Activated CD8-positive, alpha-beta T cell treated with anti-CD3 and anti-CD28 coated beads, Interleukin-2, amount 10 ng/mL, durations not matched to agents 7 days and 5 days (primary cell): ENCODE measurements at regions of chr1 and their contacts with region 1.

Region 1: GRCh38 chr1:206479183-206480125 is 9.2 kb downstream of the IKBKE start:
- DNase-seq: peak; percentile 80
- ATAC-seq: peak; percentile 73
- H3K4me3 Mint-ChIP-seq: no peak overlapping the region
- H3K27ac Mint-ChIP-seq: peak overlapping the region; percentile 55
- H3K4me1 Mint-ChIP-seq: peaks cover 18% of the 10 kb centered on the region
- H3K27me3 Mint-ChIP-seq: no peaks in the 10 kb centered on the region

Region 2: DNA sequence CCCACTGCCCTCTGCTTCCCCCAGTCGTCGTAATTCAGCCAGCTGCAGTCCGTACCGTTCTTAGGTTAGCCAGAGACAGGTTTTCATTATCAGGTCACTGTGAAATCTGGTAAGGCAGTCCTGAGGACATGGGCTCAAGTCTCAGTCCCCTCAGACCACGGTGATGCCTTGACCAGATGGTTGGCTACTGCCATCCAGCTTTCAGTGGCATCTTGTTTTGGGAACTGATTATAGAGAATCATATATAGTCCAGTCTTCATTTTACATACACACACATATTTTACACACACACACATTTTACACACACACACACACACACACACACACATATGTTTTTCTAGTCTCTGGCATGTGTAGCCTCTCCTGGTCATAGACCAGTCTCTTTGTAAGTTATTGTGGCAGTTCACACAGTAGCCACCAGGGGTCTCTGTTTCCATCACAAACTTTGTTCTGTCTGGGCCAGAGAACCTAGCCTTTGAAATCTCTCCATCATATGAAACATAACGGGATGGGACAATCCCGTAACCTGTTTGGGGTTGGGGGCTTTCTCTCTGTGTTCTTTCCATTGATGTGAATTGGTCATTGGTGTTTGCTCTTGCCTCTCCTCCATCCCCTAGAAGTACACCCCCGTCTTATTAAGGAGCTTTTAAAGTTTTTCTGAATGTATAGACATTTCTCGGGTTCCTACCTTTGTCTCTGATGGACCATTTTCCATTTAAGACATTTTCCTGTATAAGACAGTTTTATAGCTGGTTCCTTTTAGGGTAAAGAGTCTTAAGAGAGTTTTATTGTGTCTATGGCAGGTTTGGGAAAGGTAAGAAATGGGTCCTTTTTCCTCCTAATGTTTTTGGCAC is 17.6 kb before region 1 on chr1:
- CTCF ChIA-PET with region 1: interaction called, 94 read pairs
- POLR2A ChIA-PET with region 1: interaction called, 3 read pairs
- DNase-seq: peak; percentile 88
- ATAC-seq: peak; percentile 73
- H3K4me3 Mint-ChIP-seq: no peak overlapping the region
- H3K27ac Mint-ChIP-seq: no peak overlapping the region
- H3K4me1 Mint-ChIP-seq: peaks cover 43% of the 10 kb centered on the region
- H3K27me3 Mint-ChIP-seq: no peaks in the 10 kb centered on the region

Region 3: GRCh38 chr1:206489980-206490770 is 10.7 kb after region 1 on chr1:
- CTCF ChIA-PET with region 1: interaction called, 28 read pairs
- POLR2A ChIA-PET with region 1: no interaction called
- DNase-seq: peak; percentile 78
- ATAC-seq: peak; percentile 84
- H3K4me3 Mint-ChIP-seq: no peak overlapping the region
- H3K27ac Mint-ChIP-seq: peak overlapping the region; percentile 68
- H3K4me1 Mint-ChIP-seq: peaks cover 21% of the 10 kb centered on the region
- H3K27me3 Mint-ChIP-seq: no peaks in the 10 kb centered on the region

Region 4: GRCh38 chr1:206496131-206496793 is 16.8 kb after region 1 on chr1:
- CTCF ChIA-PET with region 1: interaction called, 28 read pairs
- POLR2A ChIA-PET with region 1: interaction called, 5 read pairs
- DNase-seq: no peak
- ATAC-seq: no peak
- H3K4me3 Mint-ChIP-seq: no peak overlapping the region
- H3K27ac Mint-ChIP-seq: no peak overlapping the region
- H3K4me1 Mint-ChIP-seq: peaks cover 11% of the 10 kb centered on the region
- H3K27me3 Mint-ChIP-seq: no peaks in the 10 kb centered on the region

Region 5: GRCh38 chr1:206551986-206552326 is 72.5 kb after region 1 on chr1:
- CTCF ChIA-PET with region 1: interaction called, 12 read pairs
- POLR2A ChIA-PET with region 1: no interaction called
- DNase-seq: peak; percentile 91
- ATAC-seq: peak; percentile 84
- H3K4me3 Mint-ChIP-seq: peak overlapping the region; percentile 76
- H3K27ac Mint-ChIP-seq: peak overlapping the region; percentile 97
- H3K4me1 Mint-ChIP-seq: peaks cover 65% of the 10 kb centered on the region
- H3K27me3 Mint-ChIP-seq: no peaks in the 10 kb centered on the region

Region 6: GRCh38 chr1:206556750-206557635 is 77.5 kb after region 1 on chr1:
- CTCF ChIA-PET with region 1: interaction called, 12 read pairs
- POLR2A ChIA-PET with region 1: no interaction called
- DNase-seq: peak; percentile 95
- ATAC-seq: peak; percentile 71
- H3K4me3 Mint-ChIP-seq: peak overlapping the region; percentile 86
- H3K27ac Mint-ChIP-seq: peak overlapping the region; percentile 82
- H3K4me1 Mint-ChIP-seq: peaks cover 67% of the 10 kb centered on the region
- H3K27me3 Mint-ChIP-seq: no peaks in the 10 kb centered on the region

Region 7: GRCh38 chr1:206612129-206612876 is 132.8 kb after region 1 on chr1 and contains the start of gene EIF2D:
- CTCF ChIA-PET with region 1: interaction called, 15 read pairs
- POLR2A ChIA-PET with region 1: no interaction called
- DNase-seq: peak; percentile 95
- ATAC-seq: peak; percentile 98
- H3K4me3 Mint-ChIP-seq: peak within 1 kb of the TSS; percentile 94
- H3K27ac Mint-ChIP-seq: peak within 1 kb of the TSS; percentile 90
- H3K4me1 Mint-ChIP-seq: peaks cover 35% of the 10 kb centered on the region
- H3K27me3 Mint-ChIP-seq: peaks cover 10% of the 10 kb centered on the region
- total RNA-seq, gene EIF2D: 41.6 to 45.1 TPM

Region 8: DNA sequence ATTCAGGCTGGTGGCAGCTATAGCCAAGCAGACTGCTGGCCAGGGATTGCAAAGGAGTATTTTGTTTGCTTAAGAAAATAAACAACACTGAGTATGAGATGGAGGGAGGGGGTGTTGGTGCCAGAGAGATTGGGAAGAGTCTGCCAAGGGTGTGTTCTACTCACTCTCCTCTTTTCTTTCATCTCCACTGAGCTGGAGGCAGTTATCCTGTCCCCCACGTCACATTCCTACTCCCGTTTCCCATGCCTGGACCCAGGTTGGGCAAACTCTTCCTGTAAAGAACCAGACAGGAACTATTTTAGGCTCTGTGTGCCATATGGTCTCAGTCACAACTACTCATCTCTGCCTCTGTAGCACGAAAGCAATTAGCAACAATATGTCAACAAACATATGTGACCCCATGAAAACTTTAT is 416.4 kb after region 1 on chr1:
- CTCF ChIA-PET with region 1: no interaction called
- POLR2A ChIA-PET with region 1: no interaction called
- DNase-seq: peak; percentile 9
- ATAC-seq: no peak
- H3K4me3 Mint-ChIP-seq: no peak overlapping the region
- H3K27ac Mint-ChIP-seq: no peak overlapping the region
- H3K4me1 Mint-ChIP-seq: peaks cover 10% of the 10 kb centered on the region
- H3K27me3 Mint-ChIP-seq: peaks cover 2% of the 10 kb centered on the region

Region 9: GRCh38 chr1:207052911-207053769 is 573.7 kb after region 1 on chr1 and contains the start of gene PFKFB2:
- CTCF ChIA-PET with region 1: no interaction called
- POLR2A ChIA-PET with region 1: no interaction called
- DNase-seq: peak; percentile 96
- ATAC-seq: peak; percentile 93
- H3K4me3 Mint-ChIP-seq: peak within 1 kb of the TSS; percentile 86
- H3K27ac Mint-ChIP-seq: peak within 1 kb of the TSS; percentile 92
- H3K4me1 Mint-ChIP-seq: peaks cover 46% of the 10 kb centered on the region
- H3K27me3 Mint-ChIP-seq: no peaks in the 10 kb centered on the region
- total RNA-seq, gene PFKFB2: 5.0 to 6.6 TPM